Heart left ventricle (tissue), 16 donors: ENCODE measurements at regions of chr19 and their contacts with region 1.

Region 1: DNA sequence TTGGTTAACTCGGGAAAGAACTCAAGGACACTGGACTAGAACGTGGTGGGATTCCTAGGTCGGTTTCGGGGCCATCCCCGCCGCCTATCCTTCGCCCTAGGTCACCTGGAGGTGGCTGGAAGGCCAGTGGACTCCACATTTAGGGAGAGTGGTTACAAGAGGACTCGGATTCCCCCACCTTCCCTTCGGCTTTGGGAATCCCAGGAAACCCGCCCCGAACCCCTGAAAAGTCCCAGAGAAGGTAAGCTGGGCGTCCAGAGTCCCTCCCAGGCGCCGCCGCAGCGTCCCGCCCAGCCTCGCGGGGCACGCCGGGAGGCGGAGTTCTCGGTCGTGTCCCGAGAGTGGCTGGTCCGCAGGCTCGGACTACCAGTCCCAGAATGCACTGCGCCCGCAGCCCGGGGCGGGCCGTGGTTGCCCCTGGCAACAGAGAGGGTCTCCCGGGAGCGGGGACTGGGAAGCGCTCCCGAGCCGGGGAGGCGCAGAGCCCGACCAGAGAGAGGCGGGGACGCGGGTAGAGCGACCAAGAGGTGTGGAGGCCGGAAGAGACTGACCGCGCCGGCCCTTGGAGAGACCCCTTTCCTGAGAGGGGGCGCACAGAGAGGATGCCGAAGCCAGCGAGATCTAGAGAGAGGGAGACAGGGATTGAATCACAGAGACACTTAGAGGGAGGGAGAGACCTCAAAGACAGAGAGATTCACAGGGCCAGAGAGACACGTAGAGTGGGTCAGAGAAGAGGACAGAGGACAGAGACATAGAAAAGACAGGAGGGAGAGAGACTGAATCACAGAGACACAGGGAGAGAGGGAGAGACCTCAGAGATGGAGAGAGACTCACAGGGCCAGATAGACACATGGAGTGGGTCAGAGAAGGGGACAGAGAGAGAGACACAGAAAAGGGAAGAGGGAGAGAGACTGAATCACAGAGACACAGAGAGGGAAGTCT is 2.6 kb upstream of the PRKCG start:
- DNase-seq: peak; percentile 94 to 98 (median 95)
- ATAC-seq: peak; percentile 98 to 100 (median 100)
- H3K4me3 ChIP-seq: peak overlapping the region; percentile 34 to 83 (median 58)
- H3K27ac ChIP-seq: peak overlapping the region in 5 of 12 donors; percentile 18 to 54 (median 35)
- H3K4me1 ChIP-seq: peaks cover 0 to 56% (median 20%) of the 10 kb centered on the region in 12 donors
- H3K27me3 ChIP-seq: peaks cover 22 to 43% (median 34%) of the 10 kb centered on the region in 9 donors
- CTCF ChIP-seq: no peak
- POLR2A ChIP-seq: peak in 1 of 2 donors; percentile 44

Region 2: DNA sequence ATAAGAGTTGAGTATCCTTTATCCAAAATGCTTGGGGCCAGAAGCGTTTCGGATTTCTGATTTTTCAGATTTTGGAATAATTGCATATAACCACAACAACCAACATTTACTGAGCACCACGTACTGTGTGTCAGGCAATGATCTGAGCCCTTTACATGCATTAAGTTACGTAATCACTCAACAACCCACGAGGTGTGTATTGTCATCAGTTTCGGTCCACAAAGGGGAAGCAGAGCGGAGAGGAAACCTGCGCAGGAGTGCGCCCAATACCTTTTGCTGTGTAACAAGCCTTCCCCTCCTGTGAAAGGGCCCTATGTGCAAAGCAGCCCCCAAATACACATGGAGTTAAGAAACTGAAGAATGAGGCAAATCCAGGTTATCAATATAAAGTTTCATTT is 34.6 kb before region 1 on chr19:
- intact Hi-C with region 1: loop called in 3 of 10 experiments (anchors 5 kb)
- DNase-seq: no peak
- ATAC-seq: no peak
- H3K4me3 ChIP-seq: no peak overlapping the region
- H3K27ac ChIP-seq: no peak overlapping the region
- H3K4me1 ChIP-seq: peaks cover 0 to 49% (median 7%) of the 10 kb centered on the region in 12 donors
- H3K27me3 ChIP-seq: no peaks in the 10 kb centered on the region
- CTCF ChIP-seq: no peak
- POLR2A ChIP-seq: no peak

Region 3: GRCh38 chr19:54102421-54103169 is 223.2 kb after region 1 on chr19 and contains the start of gene NDUFA3:
- intact Hi-C with region 1: loop called in 1 of 10 experiments (anchors 10 kb)
- DNase-seq: peak; percentile 98 to 99 (median 99)
- ATAC-seq: peak; percentile 99 to 100 (median 99)
- H3K4me3 ChIP-seq: peak within 1 kb of the TSS; percentile 60 to 98 (median 88)
- H3K27ac ChIP-seq: peak within 1 kb of the TSS; percentile 25 to 91 (median 82)
- H3K4me1 ChIP-seq: peaks cover 3 to 18% (median 11%) of the 10 kb centered on the region in 12 donors
- H3K27me3 ChIP-seq: peaks cover 0 to 9% (median 0%) of the 10 kb centered on the region in 9 donors
- CTCF ChIP-seq: no peak
- POLR2A ChIP-seq: peak; percentile 36 to 87
- total RNA-seq, gene NDUFA3: 32.2 to 501 (median 299) TPM